ENCODE measurements at regions of chr4 and their contacts with region 1.

Region 1: DNA sequence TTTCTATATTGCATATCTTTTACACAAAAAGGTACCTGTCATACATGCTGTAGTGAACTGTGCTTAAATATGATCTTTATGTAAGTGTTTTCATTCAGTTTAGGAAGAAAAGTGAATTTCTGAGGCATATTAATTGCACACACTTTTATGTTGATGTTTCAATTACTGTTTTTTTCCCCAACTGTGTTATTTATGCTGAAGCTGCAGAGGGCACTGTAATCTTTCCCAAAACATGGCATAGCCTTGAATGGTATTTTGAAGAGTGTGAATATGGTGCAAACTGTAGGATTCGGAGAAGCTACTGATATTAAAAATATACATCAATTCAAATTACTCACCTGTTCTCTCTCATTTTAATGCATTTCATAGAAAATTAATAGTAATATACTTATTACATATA is 6.0 kb upstream of the CENPE start:
- DNase-seq: no peak
- H3K4me3 ChIP-seq: no peak overlapping the region
- H3K27ac ChIP-seq: no peak overlapping the region
- H3K27me3 ChIP-seq: peaks cover 0 to 7% (median 0%) of the 10 kb centered on the region in 45 donors
- CTCF ChIP-seq: peak in 54 of 56 donors; percentile 37 to 87 (median 57)

Region 2: GRCh38 chr4:102760645-102761295 is 443.3 kb before region 1 on chr4 and contains the start of gene MANBA:
- intact Hi-C with region 1: no loop called
- DNase-seq: peak; percentile 65 to 89 (median 82)
- H3K4me3 ChIP-seq: peak within 1 kb of the TSS; percentile 63 to 100 (median 95)
- H3K27ac ChIP-seq: peak within 1 kb of the TSS in 58 of 59 donors; percentile 52 to 93 (median 82)
- H3K27me3 ChIP-seq: no peaks in the 10 kb centered on the region
- CTCF ChIP-seq: peak in 27 of 56 donors; percentile 4 to 48 (median 19)
- total RNA-seq, gene MANBA: 18.6 to 39.4 (median 27.7) TPM

Region 3: DNA sequence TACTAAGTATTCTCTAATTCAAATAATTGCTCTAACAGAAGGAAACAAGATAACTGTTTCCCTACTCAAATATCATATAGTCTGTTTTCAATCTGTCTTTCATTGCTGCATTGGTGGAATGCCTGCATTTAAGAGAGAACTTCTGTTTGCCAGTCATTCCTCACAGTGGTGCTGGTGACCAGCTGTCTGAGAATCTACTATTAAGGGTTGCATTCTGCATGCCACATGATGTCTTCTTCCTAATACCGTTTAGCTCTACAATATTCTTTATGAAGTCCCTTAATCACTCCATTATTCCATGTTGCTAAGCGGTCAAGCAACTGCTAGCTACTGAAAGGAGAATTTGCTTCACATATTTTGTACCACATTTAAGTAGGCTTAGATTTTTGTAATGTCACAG is 161.2 kb after region 1 on chr4:
- intact Hi-C with region 1: no loop called
- DNase-seq: no peak
- H3K4me3 ChIP-seq: no peak overlapping the region
- H3K27ac ChIP-seq: no peak overlapping the region
- H3K27me3 ChIP-seq: peaks cover 0 to 3% (median 0%) of the 10 kb centered on the region in 45 donors
- CTCF ChIP-seq: no peak

Region 4: GRCh38 chr4:103786014-103786413 is 581.9 kb after region 1 on chr4:
- intact Hi-C with region 1: loop called in 1 of 2 experiments (anchors 5 kb)
- DNase-seq: no peak
- H3K4me3 ChIP-seq: no peak overlapping the region
- H3K27ac ChIP-seq: no peak overlapping the region
- H3K27me3 ChIP-seq: no peaks in the 10 kb centered on the region
- CTCF ChIP-seq: peak in 41 of 56 donors; percentile 11 to 56 (median 36)

Region 5: DNA sequence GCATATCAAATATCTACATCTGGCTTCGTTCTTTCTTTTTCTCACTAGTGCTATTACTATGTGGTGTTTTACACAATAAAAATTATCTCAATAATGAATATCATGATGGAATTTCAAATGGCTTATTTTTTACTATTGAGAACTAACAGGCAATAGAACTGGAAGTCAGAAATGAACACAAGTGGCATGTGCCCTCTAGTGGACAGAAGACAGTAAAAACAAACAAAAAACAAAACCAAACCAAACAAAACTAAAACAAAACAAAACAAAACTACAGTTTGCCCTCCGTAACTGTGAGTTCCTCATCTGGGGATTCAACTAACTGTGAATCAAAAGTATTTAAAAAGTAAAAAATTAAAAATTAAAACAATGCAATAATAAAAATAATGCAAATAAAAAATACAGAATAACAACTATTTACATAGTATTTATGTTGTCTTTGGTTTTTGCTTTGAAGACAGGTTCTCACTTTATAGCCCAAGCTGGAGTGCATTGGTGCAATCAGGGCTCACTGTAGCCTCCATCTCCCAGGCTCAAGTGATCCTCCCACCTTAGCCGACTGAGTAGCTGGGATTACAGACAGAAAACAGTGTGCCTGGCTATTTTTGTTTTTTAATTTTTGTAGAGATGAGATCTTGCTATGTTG is 711.2 kb after region 1 on chr4:
- intact Hi-C with region 1: loop called in 1 of 2 experiments (anchors 2 kb)
- DNase-seq: no peak
- H3K4me3 ChIP-seq: no peak overlapping the region
- H3K27ac ChIP-seq: no peak overlapping the region
- H3K27me3 ChIP-seq: no peaks in the 10 kb centered on the region
- CTCF ChIP-seq: peak; percentile 49 to 80 (median 68)

Region 6: DNA sequence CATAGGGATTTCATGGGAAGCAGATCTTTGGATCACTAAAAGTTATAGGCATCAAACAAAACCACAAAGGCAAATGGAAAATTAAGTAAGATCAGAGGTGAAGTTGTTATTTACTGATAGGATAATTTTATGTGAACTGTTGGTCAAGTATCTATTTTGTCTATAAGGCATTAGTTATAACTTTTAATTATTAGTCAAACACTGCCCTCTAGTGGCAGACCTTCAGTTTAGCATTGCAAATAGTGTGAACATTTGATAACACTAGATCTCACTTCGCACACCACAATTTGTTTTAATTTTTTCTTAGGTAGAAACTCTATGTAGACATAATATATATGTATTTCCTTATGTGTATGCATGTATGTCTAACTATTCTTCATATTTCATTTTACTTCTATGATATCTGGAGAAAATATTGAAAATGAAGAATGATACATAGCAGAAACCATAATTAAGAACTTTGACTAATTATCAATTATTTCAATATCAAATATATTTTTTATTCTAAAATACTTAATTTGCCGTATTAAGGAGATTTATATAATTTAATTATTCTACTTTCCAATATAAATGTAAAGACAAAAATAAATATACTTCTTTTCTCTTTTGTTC is 730.2 kb after region 1 on chr4:
- intact Hi-C with region 1: loop called in 1 of 2 experiments (anchors 5 kb)
- DNase-seq: peak in 1 of 10 donors; percentile 22
- H3K4me3 ChIP-seq: no peak overlapping the region
- H3K27ac ChIP-seq: no peak overlapping the region
- H3K27me3 ChIP-seq: peaks cover 0 to 5% (median 0%) of the 10 kb centered on the region in 45 donors
- CTCF ChIP-seq: peak; percentile 70 to 97 (median 87)

Measured in dorsolateral prefrontal cortex (tissue), 120 donors.